Lower leg skin (tissue), 4 donors: ENCODE measurements at regions of chr22 and their contacts with region 1.

Region 1: DNA sequence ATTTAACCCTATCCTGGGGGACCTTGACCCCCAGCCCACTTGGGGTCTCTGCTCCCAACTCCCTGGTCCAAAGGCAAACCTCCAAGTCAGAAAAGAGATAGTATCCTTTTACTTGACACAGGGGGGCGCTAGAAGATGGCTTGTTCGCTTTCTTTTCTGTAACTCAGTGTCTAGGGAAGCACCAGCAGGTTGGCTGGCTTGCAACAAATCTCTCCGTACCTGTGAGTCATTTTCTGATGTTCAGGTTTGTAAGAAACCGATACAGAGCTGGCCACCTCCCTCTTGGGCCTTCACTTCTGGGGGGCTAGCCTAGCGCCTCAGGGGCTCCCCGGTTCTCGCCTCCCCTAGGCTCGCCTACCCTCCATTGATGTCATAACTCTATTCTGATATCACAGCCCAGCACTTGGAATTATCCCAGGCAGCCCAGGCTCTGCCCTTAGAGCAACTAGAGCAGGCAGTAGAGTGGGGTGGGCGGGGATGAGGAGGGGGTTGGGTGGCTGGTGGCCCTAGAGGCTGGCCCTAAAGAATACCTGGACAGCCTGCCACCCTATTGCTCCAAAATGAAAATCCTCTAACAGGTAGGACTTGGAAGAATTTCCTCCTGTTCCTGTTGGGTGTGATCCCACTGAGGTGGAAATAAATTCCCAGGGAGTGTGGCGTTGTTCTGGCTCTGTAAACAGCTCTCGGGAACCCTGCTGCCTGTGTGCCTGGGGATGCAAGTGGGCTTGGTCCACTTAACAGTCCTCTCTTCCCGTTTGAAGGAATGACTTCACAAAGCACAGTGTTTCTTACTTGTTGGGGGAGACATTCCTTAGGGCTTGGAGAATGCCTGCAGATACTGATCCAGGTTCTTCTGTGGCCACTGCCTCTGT is 69.4 kb downstream of the OSBP2 start:
- DNase-seq: peak in 1 of 2 donors; percentile 52
- H3K4me3 ChIP-seq: no peak overlapping the region
- CTCF ChIP-seq: no peak
- POLR2A ChIP-seq: no peak

Region 2: DNA sequence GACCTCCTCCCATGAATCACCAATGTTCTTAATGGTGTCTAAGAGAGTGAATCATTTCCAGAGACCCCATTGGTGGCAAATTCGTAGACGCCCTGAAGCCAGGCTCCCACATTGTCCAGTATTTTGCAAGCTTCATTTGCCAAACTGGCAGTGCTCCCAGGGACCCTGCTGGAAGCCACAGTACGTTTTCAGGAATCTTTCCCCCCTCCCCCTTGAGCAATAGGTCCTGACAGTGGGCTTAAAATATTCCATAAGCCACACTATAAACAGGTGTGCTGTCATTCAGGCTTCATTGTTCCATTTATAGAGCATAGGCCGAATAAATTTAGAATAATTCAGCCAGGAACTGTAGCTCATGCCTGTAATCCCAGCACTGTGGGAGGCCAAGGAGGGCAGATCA is 79.2 kb after region 1 on chr22:
- intact Hi-C with region 1: no loop called
- DNase-seq: peak; percentile 4 to 57
- H3K4me3 ChIP-seq: no peak overlapping the region
- CTCF ChIP-seq: no peak
- POLR2A ChIP-seq: no peak

Region 3: GRCh38 chr22:30920407-30920806 is 156.4 kb after region 1 on chr22:
- intact Hi-C with region 1: loop called (anchors 5 kb)
- DNase-seq: peak; percentile 47 to 93
- H3K4me3 ChIP-seq: no peak overlapping the region
- CTCF ChIP-seq: peak in 1 of 3 donors; percentile 44
- POLR2A ChIP-seq: no peak